ENCODE measurements at regions of chr11 and their contacts with region 1.

Region 1: DNA sequence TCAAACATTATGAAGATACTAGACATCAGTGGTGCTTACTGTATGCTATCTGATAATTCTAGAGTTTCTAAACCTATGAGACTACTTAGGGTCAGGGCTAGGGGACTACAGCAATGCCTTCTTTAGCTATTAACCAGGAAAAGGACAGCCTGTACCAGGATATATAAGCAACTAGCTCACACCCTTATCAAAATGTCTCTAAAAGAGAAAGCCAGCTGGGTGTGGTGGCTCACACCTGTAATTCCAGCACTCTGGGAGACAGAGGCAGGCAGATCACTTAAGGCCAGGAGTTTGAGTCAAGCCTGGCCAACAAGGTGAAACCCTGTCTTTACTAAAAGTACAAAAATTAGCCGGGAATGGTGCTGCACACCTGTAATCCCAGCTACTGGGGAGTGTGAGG is 55.8 kb downstream of the RAB6A start:
- DNase-seq: no peak
- ATAC-seq: no peak
- H3K4me3 Mint-ChIP-seq: no peak overlapping the region
- H3K27ac Mint-ChIP-seq: no peak overlapping the region
- H3K4me1 Mint-ChIP-seq: no peaks in the 10 kb centered on the region
- H3K27me3 Mint-ChIP-seq: no peaks in the 10 kb centered on the region
- CTCF ChIP-seq: no peak

Region 2: DNA sequence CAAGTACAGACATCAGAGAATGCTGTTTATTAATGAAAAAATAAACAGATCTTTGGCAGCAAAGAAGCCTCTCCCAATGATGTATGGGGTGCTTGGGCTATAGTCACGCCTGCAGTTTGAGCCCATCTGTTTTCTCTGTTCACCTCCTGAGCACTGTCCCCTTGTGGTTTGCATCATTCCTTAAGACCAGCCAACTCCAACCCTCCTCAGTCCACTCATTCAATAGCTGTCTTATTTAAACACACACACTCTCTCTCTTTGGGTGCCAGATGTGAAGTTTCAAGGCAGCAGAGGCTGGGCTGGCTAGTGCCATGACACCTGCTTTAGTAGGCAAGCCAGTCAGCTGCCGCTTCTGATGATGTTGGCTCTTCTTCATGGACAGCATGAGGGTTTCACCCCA is 945.4 kb after region 1 on chr11:
- CTCF ChIA-PET with region 1: no interaction called
- POLR2A ChIA-PET with region 1: no interaction called
- intact Hi-C with region 1: no loop called
- DNase-seq: no peak
- ATAC-seq: no peak
- H3K4me3 Mint-ChIP-seq: no peak overlapping the region
- H3K27ac Mint-ChIP-seq: no peak overlapping the region
- H3K4me1 Mint-ChIP-seq: no peaks in the 10 kb centered on the region
- H3K27me3 Mint-ChIP-seq: no peaks in the 10 kb centered on the region
- CTCF ChIP-seq: no peak

Region 3: DNA sequence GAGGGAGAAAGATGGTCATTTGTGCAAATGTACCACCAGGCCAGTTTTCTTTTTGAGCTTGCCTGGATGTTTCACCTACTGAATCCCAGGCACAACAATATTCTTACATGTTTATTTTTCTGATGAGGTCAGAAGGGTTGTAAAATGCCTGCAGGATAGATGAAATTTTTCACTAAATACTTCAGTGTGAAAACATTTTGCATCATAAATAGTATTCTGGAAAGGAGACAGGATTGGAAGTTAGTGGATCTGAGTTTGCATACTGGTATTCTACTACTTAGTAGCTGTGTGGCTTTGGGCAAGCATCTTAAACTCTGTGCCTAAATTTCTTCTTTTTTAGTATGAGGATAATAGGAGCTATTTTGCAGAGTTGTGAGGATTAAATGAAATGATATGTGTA is 1068.4 kb after region 1 on chr11:
- CTCF ChIA-PET with region 1: no interaction called
- POLR2A ChIA-PET with region 1: interaction called, 10 read pairs
- intact Hi-C with region 1: no loop called
- DNase-seq: no peak
- ATAC-seq: no peak
- H3K4me3 Mint-ChIP-seq: no peak overlapping the region
- H3K27ac Mint-ChIP-seq: no peak overlapping the region
- H3K4me1 Mint-ChIP-seq: peaks cover 47% of the 10 kb centered on the region
- H3K27me3 Mint-ChIP-seq: no peaks in the 10 kb centered on the region
- CTCF ChIP-seq: no peak

Measured in activated B cell treated with CpG ODN at 0.5 μM for 24 hours (primary cell).